ENCODE measurements at regions of chr12 and their contacts with region 1.

Region 1: GRCh38 chr12:124036674-124037109 is 63.7 kb downstream of the ZNF664 start:
- DNase-seq: peak; percentile 23 to 33
- ATAC-seq: peak in 4 of 8 donors; percentile 44 to 61 (median 54)
- H3K4me3 ChIP-seq: no peak overlapping the region
- H3K27ac ChIP-seq: no peak overlapping the region
- H3K4me1 ChIP-seq: peaks cover 0 to 19% (median 0%) of the 10 kb centered on the region in 9 donors
- H3K27me3 ChIP-seq: no peaks in the 10 kb centered on the region
- CTCF ChIP-seq: peak; percentile 86 to 97 (median 95)

Region 2: DNA sequence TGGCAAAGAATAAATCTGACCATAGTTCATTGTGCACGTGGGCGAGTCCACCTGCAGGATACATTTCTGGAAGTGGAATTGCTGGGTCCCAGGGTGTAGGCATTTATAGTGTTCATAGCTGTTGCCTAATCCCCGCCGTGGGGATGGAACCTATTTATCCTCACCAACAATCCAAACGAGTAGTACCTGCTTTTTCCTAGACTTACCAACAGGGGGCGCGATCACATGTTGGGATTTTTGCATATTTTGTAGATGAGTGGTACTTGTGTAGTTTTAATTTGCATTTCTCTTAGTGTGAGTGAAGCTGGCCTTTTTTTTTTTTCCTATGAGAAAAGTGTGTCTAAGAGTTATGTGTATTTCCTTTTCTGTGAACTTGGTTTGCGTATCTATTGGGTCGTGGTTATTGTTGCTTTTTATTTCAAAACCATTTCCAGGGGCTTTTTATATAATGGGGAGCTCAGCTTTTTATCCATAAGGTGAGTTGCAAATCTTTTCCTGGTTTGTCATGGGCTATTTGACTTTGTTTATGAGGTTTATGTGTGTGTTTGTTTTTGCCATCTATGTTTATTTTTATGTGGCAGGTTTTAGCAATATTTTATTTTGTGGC is 131.3 kb before region 1 on chr12:
- intact Hi-C with region 1: loop called in 5 of 10 experiments (anchors 2 to 10 kb)
- DNase-seq: peak in 1 of 2 donors; percentile 55
- ATAC-seq: no peak
- H3K4me3 ChIP-seq: no peak overlapping the region
- H3K27ac ChIP-seq: no peak overlapping the region
- H3K4me1 ChIP-seq: peaks cover 0 to 11% (median 3%) of the 10 kb centered on the region in 9 donors
- H3K27me3 ChIP-seq: peaks cover 0 to 20% (median 6%) of the 10 kb centered on the region in 7 donors
- CTCF ChIP-seq: peak; percentile 67 to 83 (median 77)

Region 3: DNA sequence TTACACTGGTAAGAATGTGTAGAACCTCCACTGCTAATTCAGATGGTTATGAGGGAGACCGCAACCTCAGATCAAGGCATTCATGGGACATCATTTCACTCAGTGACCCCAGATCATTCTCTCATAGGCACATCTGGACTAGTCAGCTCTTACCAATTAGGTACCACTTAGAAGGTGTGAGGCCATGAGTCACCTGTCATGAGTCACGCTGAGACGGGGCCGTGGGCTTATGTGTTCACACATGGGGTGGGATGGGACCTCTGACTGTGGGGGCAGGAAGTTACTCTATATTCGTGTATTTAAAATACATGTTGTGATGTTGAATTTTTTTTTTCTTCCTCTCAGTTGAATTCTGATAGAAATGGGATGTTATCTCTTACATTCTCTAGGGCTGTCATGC is 120.0 kb before region 1 on chr12:
- intact Hi-C with region 1: no loop called
- DNase-seq: no peak
- ATAC-seq: no peak
- H3K4me3 ChIP-seq: no peak overlapping the region
- H3K27ac ChIP-seq: no peak overlapping the region
- H3K4me1 ChIP-seq: no peaks in the 10 kb centered on the region
- H3K27me3 ChIP-seq: peaks cover 0 to 45% (median 6%) of the 10 kb centered on the region in 7 donors
- CTCF ChIP-seq: no peak

Region 4: GRCh38 chr12:123983822-123984485 is 52.7 kb before region 1 on chr12:
- intact Hi-C with region 1: loop called in 1 of 10 experiments (anchors 5 kb)
- DNase-seq: peak in 1 of 2 donors; percentile 47
- ATAC-seq: peak; percentile 38 to 89 (median 78)
- H3K4me3 ChIP-seq: no peak overlapping the region
- H3K27ac ChIP-seq: peak overlapping the region in 1 of 10 donors; percentile 17
- H3K4me1 ChIP-seq: peaks cover 10 to 72% (median 32%) of the 10 kb centered on the region in 9 donors
- H3K27me3 ChIP-seq: no peaks in the 10 kb centered on the region
- CTCF ChIP-seq: peak; percentile 34 to 79 (median 64)

Region 5: DNA sequence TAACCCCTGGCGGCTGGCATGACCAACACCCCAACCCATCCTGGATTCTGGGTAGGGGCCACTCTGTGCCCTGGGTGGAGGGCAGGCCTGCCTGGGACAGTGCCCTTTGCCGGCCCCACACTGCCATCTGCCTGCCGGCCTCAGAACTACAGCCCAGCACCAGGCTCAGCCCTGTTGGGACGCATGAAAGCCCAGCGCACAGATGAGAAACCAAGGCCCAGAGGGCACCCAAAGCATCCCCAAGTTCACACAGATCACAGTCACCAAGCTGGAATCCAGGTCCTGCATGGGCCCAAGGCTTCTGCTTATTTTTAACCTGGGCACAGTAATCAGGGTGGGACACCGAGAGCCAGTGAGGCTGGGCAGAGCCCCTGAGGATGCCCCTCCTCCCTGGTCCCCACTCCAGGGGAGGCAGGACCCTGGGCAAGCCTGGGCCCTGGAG is 284.4 kb after region 1 on chr12:
- intact Hi-C with region 1: loop called in 8 of 10 experiments (anchors 2 to 5 kb)
- DNase-seq: peak; percentile 57 to 79
- ATAC-seq: peak; percentile 70 to 88 (median 82)
- H3K4me3 ChIP-seq: no peak overlapping the region
- H3K27ac ChIP-seq: no peak overlapping the region
- H3K4me1 ChIP-seq: peaks cover 0 to 7% (median 0%) of the 10 kb centered on the region in 9 donors
- H3K27me3 ChIP-seq: no peaks in the 10 kb centered on the region
- CTCF ChIP-seq: peak; percentile 79 to 97 (median 93)

Region 6: DNA sequence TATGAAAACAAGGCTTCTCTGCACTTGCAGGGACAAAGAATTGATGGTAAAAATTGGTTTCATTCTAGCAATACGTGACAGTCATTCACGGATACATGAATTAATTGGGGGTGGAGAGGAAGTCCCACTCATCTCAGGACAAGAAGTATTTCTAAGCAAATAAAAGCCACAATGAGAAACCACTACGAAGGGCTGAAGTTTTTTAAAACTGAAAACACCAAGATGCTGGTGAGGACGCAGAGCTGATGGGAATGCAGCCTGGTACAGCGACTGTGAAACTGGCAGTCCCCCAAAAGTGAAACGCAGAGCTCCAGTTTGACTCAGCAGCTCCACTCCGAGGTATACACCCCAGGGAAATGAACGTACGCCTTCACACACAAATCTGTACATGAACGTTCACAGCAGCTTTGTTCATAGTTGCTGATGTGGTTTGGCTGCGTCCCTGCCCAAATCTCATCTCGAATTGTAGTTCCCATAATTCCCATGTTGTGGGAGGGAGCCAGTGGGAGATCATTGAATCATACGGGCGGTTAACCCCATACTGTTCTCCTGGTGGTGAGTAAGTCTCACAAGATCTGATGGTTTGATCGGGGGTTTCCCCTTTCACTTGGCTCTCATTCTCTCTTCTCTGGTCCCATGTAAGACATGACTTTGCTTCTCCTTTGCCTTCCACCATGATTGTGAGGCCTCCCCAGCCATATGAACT is 737.9 kb after region 1 on chr12:
- intact Hi-C with region 1: loop called (anchors 1 to 5 kb)
- DNase-seq: no peak
- ATAC-seq: peak in 4 of 8 donors; percentile 4 to 40 (median 27)
- H3K4me3 ChIP-seq: peak overlapping the region in 6 of 10 donors; percentile 14 to 32 (median 26)
- H3K27ac ChIP-seq: peak overlapping the region in 2 of 10 donors; percentile 20 to 57
- H3K4me1 ChIP-seq: peaks cover 0 to 50% (median 8%) of the 10 kb centered on the region in 9 donors
- H3K27me3 ChIP-seq: peaks cover 0 to 7% (median 0%) of the 10 kb centered on the region in 7 donors
- CTCF ChIP-seq: peak in 1 of 9 donors; percentile 8